Adrenal gland (tissue), 19 donors: ENCODE measurements at regions of chr19 and their contacts with region 1.

Region 1: GRCh38 chr19:51407511-51408131 is 9.8 kb downstream of the SIGLEC10 start:
- DNase-seq: peak in 4 of 7 donors; percentile 27 to 58 (median 41)
- H3K4me3 ChIP-seq: no peak overlapping the region
- H3K27ac ChIP-seq: peak overlapping the region in 1 of 5 donors; percentile 67
- H3K4me1 ChIP-seq: no peaks in the 10 kb centered on the region
- H3K27me3 ChIP-seq: no peaks in the 10 kb centered on the region
- CTCF ChIP-seq: peak in 5 of 6 experiments; percentile 25 to 53 (median 43)
- POLR2A ChIP-seq: no peak

Region 2: DNA sequence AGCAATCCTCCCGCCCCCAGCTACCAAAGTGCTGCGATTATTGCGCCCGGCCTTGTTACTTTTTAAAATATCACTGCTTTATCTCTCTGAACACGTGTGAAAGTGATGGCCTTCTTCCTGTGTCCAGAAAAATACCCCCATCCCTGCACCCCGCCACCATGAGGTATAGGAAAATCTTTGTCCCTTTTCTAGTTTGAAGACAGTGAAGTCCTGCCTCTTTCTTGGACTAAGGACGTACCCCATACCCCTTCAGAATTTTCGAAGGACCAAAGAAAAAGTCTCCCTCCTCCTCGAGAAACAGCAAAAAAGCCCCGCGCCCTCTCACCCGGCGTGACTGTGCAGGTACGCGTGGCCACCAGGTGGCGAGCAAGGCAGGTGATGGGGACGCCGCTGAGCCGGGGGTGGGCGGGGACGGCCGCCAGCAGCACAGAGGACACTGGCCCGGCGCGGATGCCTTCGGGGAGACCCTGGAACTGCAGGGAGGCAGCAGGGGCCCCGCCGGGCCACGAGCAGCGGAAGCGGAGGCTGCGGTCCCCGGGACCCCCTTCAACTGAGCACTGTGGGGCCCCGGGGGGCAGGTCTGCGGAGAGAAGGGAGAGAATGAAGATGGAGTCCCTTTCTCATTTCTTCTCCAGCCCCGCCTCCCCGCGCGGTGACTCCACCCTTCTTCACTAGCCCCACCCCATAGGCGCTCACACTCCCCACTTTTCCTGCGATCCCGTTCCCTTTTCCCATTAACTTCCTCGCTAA is 68.9 kb before region 1 on chr19:
- intact Hi-C with region 1: loop called in 1 of 2 experiments (anchors 10 kb)
- DNase-seq: peak; percentile 80 to 90 (median 86)
- H3K4me3 ChIP-seq: peak overlapping the region in 2 of 4 donors; percentile 44 to 75
- H3K27ac ChIP-seq: peak overlapping the region in 4 of 5 donors; percentile 13 to 87 (median 44)
- H3K4me1 ChIP-seq: peaks cover 7 to 14% of the 10 kb centered on the region in 2 donors
- H3K27me3 ChIP-seq: no peaks in the 10 kb centered on the region
- CTCF ChIP-seq: peak; percentile 74 to 94 (median 82)
- POLR2A ChIP-seq: no peak